Pancreas (tissue), 10 donors: ENCODE measurements at regions of chr12 and their contacts with region 1.

Region 1: DNA sequence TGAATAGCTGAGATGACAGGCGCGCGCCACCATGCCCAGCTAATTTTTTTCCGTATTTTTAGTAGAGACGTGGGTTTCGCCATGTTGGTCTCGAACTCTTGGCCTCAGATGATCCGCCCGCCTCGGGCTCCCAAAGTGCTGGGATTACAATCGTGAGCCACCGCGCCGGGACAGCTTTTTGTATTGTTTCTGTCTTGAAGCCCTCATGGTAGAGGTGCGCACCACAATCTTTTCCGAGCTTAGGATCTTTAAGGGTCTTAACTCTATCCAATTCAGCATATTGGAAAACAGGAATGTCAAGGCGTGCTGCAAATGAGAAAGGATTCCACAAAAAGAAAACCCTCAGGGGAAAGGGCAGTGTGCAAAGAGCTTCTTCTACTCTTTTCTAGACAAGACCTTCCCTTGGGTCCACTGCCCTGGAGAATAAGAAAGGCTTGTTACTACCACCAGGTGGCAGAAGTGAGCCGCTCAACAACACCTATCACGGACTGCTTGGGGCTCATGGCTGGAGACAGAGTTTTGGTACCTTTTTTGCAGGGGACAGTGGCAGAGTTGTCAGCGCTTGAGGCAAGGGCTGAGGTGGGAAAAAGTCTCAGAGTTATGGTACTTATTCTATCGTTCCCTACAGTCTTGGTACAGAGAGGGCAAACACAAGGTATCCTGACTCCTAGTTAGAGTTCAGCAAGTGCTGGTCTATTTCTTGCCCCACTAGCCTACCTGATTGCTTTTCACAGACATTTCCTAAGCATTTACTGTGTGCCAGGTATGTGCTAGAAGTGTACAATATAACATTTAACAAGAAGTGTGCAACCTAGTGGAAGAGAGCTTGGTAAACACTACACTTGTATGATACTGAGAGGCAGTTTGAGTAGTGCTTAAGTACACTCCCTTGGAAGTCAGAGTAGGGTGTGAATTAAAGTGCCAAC is 16.4 kb upstream of the SP7 start:
- DNase-seq: peak; percentile 72 to 87 (median 73)
- ATAC-seq: peak; percentile 98 to 100 (median 99)
- H3K4me3 ChIP-seq: no peak overlapping the region
- H3K27ac ChIP-seq: no peak overlapping the region
- H3K4me1 ChIP-seq: no peaks in the 10 kb centered on the region
- H3K27me3 ChIP-seq: no peaks in the 10 kb centered on the region
- CTCF ChIP-seq: peak; percentile 69 to 82 (median 77)

Region 2: DNA sequence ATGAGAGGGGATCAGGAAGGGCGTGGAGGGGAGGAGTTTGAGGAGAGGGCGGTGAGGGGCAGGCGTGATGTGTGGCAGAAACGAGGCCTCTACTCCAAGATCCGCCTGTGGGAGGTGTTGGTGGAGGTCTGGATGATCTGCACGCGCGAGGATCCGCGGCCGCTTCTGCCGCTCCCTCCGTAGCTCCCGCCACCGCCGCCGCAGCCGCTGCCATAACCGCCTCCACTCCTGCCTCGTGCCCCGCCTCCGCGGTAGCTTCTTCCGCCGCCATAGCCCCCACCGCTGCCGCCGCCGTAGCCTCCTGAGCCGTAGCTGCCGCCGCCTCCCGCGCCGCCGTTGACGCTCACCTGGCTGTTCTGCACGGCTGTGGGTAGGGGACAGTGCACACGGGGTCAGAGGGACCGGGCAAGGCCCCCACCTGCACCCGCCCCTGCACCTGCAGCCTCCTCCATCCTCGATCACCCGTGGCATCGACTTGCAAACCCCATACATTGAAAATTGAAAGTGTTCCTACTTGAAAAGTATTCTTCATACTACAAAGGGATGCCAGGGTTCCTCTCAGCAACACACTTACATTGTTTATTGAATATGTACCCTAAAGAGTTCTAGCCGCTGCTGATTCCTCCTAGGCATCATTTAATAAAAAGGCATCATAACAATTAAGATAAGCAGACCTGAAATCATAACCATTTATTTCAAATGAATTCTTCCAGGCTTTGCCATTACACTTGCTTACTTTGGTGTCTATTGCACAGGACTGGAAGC is 661.3 kb before region 1 on chr12:
- intact Hi-C with region 1: no loop called
- DNase-seq: peak in 2 of 6 donors; percentile 34 to 71
- ATAC-seq: peak; percentile 48 to 74 (median 65)
- H3K4me3 ChIP-seq: peak overlapping the region in 2 of 4 donors; percentile 20 to 34
- H3K27ac ChIP-seq: no peak overlapping the region
- H3K4me1 ChIP-seq: no peaks in the 10 kb centered on the region
- H3K27me3 ChIP-seq: peaks cover 0 to 4% (median 0%) of the 10 kb centered on the region in 4 donors
- CTCF ChIP-seq: no peak

Region 3: GRCh38 chr12:53054112-53054833 is 298.3 kb before region 1 on chr12:
- intact Hi-C with region 1: no loop called
- DNase-seq: peak; percentile 96 to 98 (median 97)
- ATAC-seq: peak; percentile 72 to 84 (median 80)
- H3K4me3 ChIP-seq: peak overlapping the region; percentile 31 to 59 (median 36)
- H3K27ac ChIP-seq: peak overlapping the region; percentile 82 to 99 (median 98)
- H3K4me1 ChIP-seq: peaks cover 27 to 37% (median 35%) of the 10 kb centered on the region in 3 donors
- H3K27me3 ChIP-seq: no peaks in the 10 kb centered on the region
- CTCF ChIP-seq: peak in 1 of 4 donors; percentile 16

Region 4: GRCh38 chr12:53098982-53099651 is 253.5 kb before region 1 on chr12:
- intact Hi-C with region 1: no loop called
- DNase-seq: peak; percentile 78 to 97 (median 88)
- ATAC-seq: peak; percentile 55 to 70 (median 63)
- H3K4me3 ChIP-seq: no peak overlapping the region
- H3K27ac ChIP-seq: peak overlapping the region in 3 of 4 donors; percentile 19 to 66 (median 29)
- H3K4me1 ChIP-seq: peaks cover 6 to 24% (median 14%) of the 10 kb centered on the region in 3 donors
- H3K27me3 ChIP-seq: no peaks in the 10 kb centered on the region
- CTCF ChIP-seq: peak; percentile 82 to 97 (median 88)

Region 5: GRCh38 chr12:53424626-53425514 is 72.3 kb after region 1 on chr12:
- intact Hi-C with region 1: loop called in 2 of 3 experiments (anchors 5 kb)
- DNase-seq: peak; percentile 51 to 81 (median 58)
- ATAC-seq: peak; percentile 59 to 84 (median 71)
- H3K4me3 ChIP-seq: peak overlapping the region in 2 of 4 donors; percentile 10 to 13
- H3K27ac ChIP-seq: peak overlapping the region in 3 of 4 donors; percentile 52 to 69 (median 60)
- H3K4me1 ChIP-seq: peaks cover 7 to 22% (median 9%) of the 10 kb centered on the region in 3 donors
- H3K27me3 ChIP-seq: no peaks in the 10 kb centered on the region
- CTCF ChIP-seq: no peak

Region 6: DNA sequence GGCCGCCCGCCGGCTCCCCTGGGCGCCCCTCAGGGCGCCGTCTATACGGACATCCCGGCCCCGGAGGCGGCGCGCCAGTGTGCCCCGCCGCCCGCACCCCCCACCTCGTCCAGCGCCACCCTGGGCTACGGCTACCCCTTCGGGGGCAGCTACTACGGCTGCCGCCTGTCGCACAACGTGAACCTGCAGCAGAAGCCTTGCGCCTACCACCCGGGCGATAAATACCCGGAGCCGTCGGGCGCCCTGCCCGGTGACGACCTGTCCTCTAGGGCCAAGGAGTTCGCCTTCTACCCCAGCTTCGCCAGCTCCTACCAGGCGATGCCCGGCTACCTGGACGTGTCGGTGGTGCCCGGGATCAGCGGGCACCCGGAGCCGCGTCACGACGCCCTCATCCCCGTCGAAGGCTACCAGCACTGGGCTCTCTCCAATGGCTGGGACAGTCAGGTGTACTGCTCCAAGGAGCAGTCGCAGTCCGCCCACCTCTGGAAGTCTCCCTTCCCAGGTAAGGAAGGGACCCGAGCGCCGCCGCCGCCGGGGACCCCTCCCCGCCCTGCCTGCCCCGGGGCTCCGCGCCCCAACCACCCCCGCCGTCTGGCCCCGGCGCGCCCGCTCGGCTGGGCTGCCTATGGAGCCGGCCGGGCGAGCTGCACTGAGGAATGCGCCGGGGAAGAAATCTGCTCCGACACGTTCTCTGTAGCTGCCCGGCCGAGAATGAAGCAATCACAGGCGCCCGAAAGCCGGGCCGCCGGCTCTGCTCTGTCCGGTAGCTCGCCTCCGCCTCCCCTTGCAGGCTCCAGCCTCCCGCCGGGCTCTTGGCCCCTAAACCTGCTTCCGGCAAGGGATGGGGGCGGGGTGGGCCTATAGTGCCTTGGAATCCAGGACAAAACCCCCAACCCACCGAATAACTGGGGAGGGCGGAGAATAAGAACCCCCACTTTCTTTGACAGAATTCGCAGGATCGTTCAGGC is 586.8 kb after region 1 on chr12:
- intact Hi-C with region 1: no loop called
- DNase-seq: peak in 2 of 6 donors; percentile 68 to 73
- ATAC-seq: peak; percentile 22 to 68 (median 51)
- H3K4me3 ChIP-seq: peak overlapping the region in 1 of 4 donors; percentile 23
- H3K27ac ChIP-seq: no peak overlapping the region
- H3K4me1 ChIP-seq: no peaks in the 10 kb centered on the region
- H3K27me3 ChIP-seq: peaks cover 3 to 53% (median 23%) of the 10 kb centered on the region in 4 donors
- CTCF ChIP-seq: no peak